ENCODE measurements at regions of chr11 and their contacts with region 1.

Region 1: DNA sequence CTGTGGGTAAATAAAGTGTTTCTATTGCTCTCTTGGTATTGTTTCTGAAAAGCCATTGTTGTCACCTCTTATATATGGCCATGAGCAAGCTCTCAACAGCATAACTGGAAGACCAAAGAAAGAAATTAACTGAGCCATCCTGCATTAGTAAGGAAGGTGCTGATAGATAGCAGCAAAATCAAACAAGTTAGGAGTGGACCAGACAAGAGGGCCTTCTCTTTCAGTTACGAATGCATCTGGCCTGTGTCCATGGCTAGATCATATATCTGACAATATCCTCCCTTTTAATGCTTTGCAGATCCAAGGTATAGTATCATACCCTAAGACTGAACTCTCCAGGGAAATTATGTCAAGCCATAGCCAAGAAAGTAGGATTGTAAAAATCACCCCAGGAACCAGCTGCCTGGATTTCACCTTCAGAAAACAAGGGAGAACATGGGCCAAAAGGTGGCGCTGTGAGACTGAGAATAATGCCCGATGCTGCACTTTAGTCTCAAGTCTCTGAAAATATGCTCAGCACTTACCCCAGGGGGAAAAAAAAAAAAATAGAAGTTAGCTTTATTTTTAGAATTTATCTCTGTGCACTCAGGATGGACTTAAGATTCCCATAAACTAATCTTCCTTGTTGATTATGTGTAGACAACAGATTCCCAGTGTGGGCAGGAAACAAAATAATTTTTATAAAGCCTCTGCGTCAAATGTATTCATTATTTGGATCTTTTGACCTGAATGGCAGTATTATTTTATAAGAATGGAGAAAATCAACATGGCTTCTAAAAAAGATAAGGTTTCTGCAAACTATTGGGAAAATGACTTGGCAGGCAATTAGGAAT is 415.1 kb downstream of the ETS1 start:
- DNase-seq: peak; percentile 91
- ATAC-seq: peak; percentile 86
- H3K4me3 Mint-ChIP-seq: no peak overlapping the region
- H3K27ac Mint-ChIP-seq: no peak overlapping the region
- H3K4me1 Mint-ChIP-seq: no peaks in the 10 kb centered on the region
- H3K27me3 Mint-ChIP-seq: peaks cover 11% of the 10 kb centered on the region

Region 2: DNA sequence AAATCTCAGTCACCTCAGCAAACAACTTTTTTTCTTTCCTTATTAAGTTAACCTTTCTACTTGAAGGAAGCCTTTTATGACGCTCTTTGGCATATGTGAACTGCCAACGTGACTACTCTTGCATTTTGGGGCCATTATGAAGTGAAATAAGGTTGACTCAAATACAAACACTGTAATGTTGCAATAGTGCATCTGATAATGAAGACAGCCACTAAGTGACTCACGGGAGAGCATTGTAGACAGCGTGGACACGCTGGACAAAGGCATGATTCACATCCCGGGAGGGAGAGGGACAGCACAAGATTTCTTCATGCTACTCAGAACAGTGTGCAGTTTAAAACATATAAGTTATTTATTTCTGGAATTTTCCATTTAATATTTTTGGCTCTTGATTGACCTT is 145.7 kb before region 1 on chr11:
- CTCF ChIA-PET with region 1: interaction called, 15 read pairs
- POLR2A ChIA-PET with region 1: no interaction called
- DNase-seq: no peak
- ATAC-seq: no peak
- H3K4me3 Mint-ChIP-seq: no peak overlapping the region
- H3K27ac Mint-ChIP-seq: no peak overlapping the region
- H3K4me1 Mint-ChIP-seq: peaks cover 3% of the 10 kb centered on the region
- H3K27me3 Mint-ChIP-seq: peaks cover 41% of the 10 kb centered on the region

Region 3: GRCh38 chr11:128039140-128040021 is 132.9 kb before region 1 on chr11:
- CTCF ChIA-PET with region 1: interaction called, 15 read pairs
- POLR2A ChIA-PET with region 1: interaction called, 5 read pairs
- DNase-seq: peak; percentile 90
- ATAC-seq: peak; percentile 93
- H3K4me3 Mint-ChIP-seq: peak overlapping the region; percentile 66
- H3K27ac Mint-ChIP-seq: peak overlapping the region; percentile 97
- H3K4me1 Mint-ChIP-seq: peaks cover 41% of the 10 kb centered on the region
- H3K27me3 Mint-ChIP-seq: no peaks in the 10 kb centered on the region

Region 4: DNA sequence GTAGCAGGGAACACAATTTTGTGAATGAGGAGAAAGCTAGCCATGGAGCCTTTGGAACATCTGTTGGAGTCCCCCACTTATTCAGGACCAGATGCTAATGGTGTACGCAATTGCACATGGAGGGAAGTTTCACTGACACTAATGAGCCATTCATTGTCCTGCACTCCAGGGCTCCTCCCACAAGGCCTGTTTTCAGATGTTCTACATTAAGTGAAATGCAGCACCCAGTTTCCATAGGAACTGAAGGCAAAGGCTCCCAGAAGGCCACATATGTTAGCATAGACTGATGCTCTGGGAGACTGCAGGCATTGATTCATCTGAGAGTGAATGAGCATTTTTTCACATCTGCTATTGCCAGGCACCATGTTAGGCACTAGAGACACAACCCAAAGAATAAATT is 15.6 kb after region 1 on chr11:
- CTCF ChIA-PET with region 1: interaction called, 25 read pairs
- POLR2A ChIA-PET with region 1: no interaction called
- DNase-seq: no peak
- ATAC-seq: no peak
- H3K4me3 Mint-ChIP-seq: no peak overlapping the region
- H3K27ac Mint-ChIP-seq: no peak overlapping the region
- H3K4me1 Mint-ChIP-seq: peaks cover 29% of the 10 kb centered on the region
- H3K27me3 Mint-ChIP-seq: no peaks in the 10 kb centered on the region

Region 5: GRCh38 chr11:128271401-128271800 is 99.1 kb after region 1 on chr11:
- CTCF ChIA-PET with region 1: no interaction called
- POLR2A ChIA-PET with region 1: no interaction called
- DNase-seq: no peak
- ATAC-seq: no peak
- H3K4me3 Mint-ChIP-seq: no peak overlapping the region
- H3K27ac Mint-ChIP-seq: no peak overlapping the region
- H3K4me1 Mint-ChIP-seq: peaks cover 1% of the 10 kb centered on the region
- H3K27me3 Mint-ChIP-seq: no peaks in the 10 kb centered on the region

Region 6: GRCh38 chr11:128463371-128463829 is 291.1 kb after region 1 on chr11:
- CTCF ChIA-PET with region 1: interaction called, 10 read pairs
- POLR2A ChIA-PET with region 1: no interaction called
- DNase-seq: no peak
- ATAC-seq: no peak
- H3K4me3 Mint-ChIP-seq: no peak overlapping the region
- H3K27ac Mint-ChIP-seq: peak overlapping the region; percentile 91
- H3K4me1 Mint-ChIP-seq: peaks cover 87% of the 10 kb centered on the region
- H3K27me3 Mint-ChIP-seq: no peaks in the 10 kb centered on the region

Region 7: GRCh38 chr11:128848815-128849455 is 676.7 kb after region 1 on chr11:
- CTCF ChIA-PET with region 1: interaction called, 11 read pairs
- POLR2A ChIA-PET with region 1: no interaction called
- DNase-seq: peak; percentile 73
- ATAC-seq: peak; percentile 77
- H3K4me3 Mint-ChIP-seq: no peak overlapping the region
- H3K27ac Mint-ChIP-seq: no peak overlapping the region
- H3K4me1 Mint-ChIP-seq: peaks cover 23% of the 10 kb centered on the region
- H3K27me3 Mint-ChIP-seq: no peaks in the 10 kb centered on the region

Region 8: DNA sequence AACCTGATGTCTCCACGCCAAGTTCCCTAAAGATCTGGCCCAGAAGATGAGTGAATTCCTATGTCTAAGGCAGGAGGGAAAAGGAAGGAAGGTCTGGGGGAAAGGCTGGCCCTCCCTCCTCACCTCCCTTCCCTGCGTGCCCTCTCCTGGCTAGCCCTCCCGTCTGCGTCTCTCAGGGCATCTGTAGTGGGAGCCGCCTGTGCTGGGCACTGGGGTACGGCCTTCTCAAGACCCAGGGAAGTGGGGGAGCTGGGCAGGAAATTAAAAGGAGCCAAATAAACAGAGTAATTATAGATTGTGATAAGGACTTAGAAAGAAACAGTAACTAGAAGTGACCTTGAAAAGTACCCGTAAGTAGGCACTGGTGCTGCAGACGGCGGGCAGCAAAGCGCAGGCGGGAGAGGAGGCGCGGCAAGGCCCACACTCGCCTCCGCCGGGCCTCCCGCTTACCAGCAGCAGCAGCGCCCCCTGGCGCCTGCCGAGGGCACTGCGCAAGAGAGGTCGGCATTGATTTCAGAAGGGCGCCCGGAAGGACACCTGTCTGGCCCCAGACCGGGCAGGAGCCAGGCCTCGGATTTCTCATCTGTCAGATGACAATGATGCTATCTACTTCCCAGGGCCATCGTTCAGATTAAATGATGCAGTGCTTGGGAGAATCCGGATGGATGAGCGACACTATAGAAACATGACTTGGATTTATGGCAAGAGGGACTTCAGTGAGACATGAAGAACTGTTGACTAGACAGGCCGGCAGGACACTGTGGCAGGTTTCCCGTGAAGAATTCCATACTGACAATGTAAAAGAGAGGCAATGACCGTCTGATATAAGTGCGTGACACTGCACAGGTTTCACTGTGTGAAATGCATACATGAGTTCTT is 687.5 kb after region 1 on chr11:
- CTCF ChIA-PET with region 1: interaction called, 17 read pairs
- POLR2A ChIA-PET with region 1: no interaction called
- DNase-seq: peak; percentile 82
- ATAC-seq: peak; percentile 92
- H3K4me3 Mint-ChIP-seq: no peak overlapping the region
- H3K27ac Mint-ChIP-seq: no peak overlapping the region
- H3K4me1 Mint-ChIP-seq: peaks cover 8% of the 10 kb centered on the region
- H3K27me3 Mint-ChIP-seq: peaks cover 18% of the 10 kb centered on the region

Measured in activated CD8-positive, alpha-beta T cell treated with anti-CD3 and anti-CD28 coated beads, Interleukin-2, amount 10 ng/mL, durations not matched to agents 7 days and 5 days (primary cell).